GM12878 (cell line): ENCODE measurements at regions of chr20 and their contacts with region 1.

Region 1: GRCh38 chr20:16801919-16802911 is 54.1 kb downstream of the OTOR start:
- DNase-seq: peak; percentile 8
- ATAC-seq: peak; percentile 70
- H3K4me3 ChIP-seq: no peak overlapping the region
- H3K27ac ChIP-seq: no peak overlapping the region
- H3K4me1 ChIP-seq: no peaks in the 10 kb centered on the region
- H3K27me3 ChIP-seq: no peaks in the 10 kb centered on the region; a peak in 1 of 4 replicates
- CTCF ChIP-seq: peak; percentile 80 to 84 (median 80)
- EP300 ChIP-seq: no peak
- POLR2A ChIP-seq: no peak
- RAD21 ChIP-seq: peak; percentile 74

Region 2: DNA sequence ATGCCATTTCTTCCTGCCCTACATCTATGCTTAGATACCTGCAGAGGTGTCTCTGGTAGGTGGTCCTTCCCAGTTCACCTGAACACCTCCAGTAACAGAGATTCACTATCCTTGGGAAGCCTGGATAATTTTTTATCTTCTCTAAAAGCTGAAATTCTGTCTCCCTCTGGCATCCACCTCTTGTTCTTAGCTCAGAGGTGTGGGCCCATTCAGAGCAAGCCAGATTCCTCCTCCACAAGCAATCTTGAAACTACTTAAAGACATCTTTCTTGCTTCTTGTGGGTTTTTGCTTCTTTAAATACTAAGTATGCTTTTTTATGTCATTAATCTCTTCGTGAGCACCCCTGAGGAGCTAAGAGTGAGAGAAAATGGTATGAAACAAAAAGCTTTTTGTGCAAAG is 82.8 kb before region 1 on chr20:
- CTCF ChIA-PET with region 1: no interaction called
- POLR2A ChIA-PET with region 1: no interaction called
- RAD21 ChIA-PET with region 1: no interaction called
- SMC1A ChIA-PET with region 1: no interaction called
- in situ Hi-C with region 1: no loop called
- intact Hi-C with region 1: no loop called
- DNase-seq: no peak
- ATAC-seq: no peak
- H3K4me3 ChIP-seq: no peak overlapping the region
- H3K27ac ChIP-seq: no peak overlapping the region
- H3K4me1 ChIP-seq: no peaks in the 10 kb centered on the region
- H3K27me3 ChIP-seq: peaks cover 0 to 5% of the 10 kb centered on the region in 2 experiments; a peak in 3 of 4 replicates
- CTCF ChIP-seq: no peak
- EP300 ChIP-seq: no peak
- POLR2A ChIP-seq: no peak
- RAD21 ChIP-seq: no peak

Region 3: DNA sequence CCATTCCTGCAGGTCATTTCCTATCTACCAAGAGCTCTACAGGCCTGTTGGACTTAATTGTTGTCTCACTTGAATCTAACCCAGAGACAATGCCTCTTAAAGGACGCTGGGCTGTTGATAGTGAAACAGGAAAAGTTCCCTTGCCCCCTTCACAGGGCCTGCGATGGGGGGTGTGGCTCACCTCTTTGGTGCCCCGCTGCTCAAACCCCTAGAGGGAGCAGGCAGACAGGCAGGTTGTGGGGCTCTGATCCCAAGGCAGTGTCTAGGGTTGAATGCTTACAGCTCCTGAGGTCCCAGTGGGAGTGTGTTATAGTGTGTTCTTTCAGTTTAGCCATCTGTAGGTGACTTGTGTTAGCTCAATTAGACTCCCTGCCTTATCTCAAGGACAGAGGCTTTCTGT is 14.0 kb after region 1 on chr20:
- CTCF ChIA-PET with region 1: interaction called, 72 read pairs
- POLR2A ChIA-PET with region 1: no interaction called
- RAD21 ChIA-PET with region 1: interaction called, 14 read pairs
- SMC1A ChIA-PET with region 1: interaction called, 18 read pairs
- in situ Hi-C with region 1: no loop called
- intact Hi-C with region 1: no loop called
- DNase-seq: no peak
- ATAC-seq: no peak; the same call in 2 of the 3 replicates
- H3K4me3 ChIP-seq: no peak overlapping the region
- H3K27ac ChIP-seq: no peak overlapping the region
- H3K4me1 ChIP-seq: no peaks in the 10 kb centered on the region
- H3K27me3 ChIP-seq: no peaks in the 10 kb centered on the region
- CTCF ChIP-seq: no peak
- EP300 ChIP-seq: no peak
- POLR2A ChIP-seq: no peak
- RAD21 ChIP-seq: no peak

Region 4: GRCh38 chr20:16821211-16822089 is 19.2 kb after region 1 on chr20:
- CTCF ChIA-PET with region 1: interaction called, 72 read pairs
- POLR2A ChIA-PET with region 1: no interaction called
- RAD21 ChIA-PET with region 1: interaction called, 14 read pairs
- SMC1A ChIA-PET with region 1: interaction called, 18 read pairs
- in situ Hi-C with region 1: no loop called
- intact Hi-C with region 1: no loop called
- DNase-seq: no peak
- ATAC-seq: peak; percentile 78
- H3K4me3 ChIP-seq: no peak overlapping the region
- H3K27ac ChIP-seq: no peak overlapping the region
- H3K4me1 ChIP-seq: no peaks in the 10 kb centered on the region
- H3K27me3 ChIP-seq: no peaks in the 10 kb centered on the region
- CTCF ChIP-seq: peak; percentile 74 to 95 (median 90)
- EP300 ChIP-seq: no peak
- POLR2A ChIP-seq: no peak
- RAD21 ChIP-seq: peak; percentile 59

Region 5: DNA sequence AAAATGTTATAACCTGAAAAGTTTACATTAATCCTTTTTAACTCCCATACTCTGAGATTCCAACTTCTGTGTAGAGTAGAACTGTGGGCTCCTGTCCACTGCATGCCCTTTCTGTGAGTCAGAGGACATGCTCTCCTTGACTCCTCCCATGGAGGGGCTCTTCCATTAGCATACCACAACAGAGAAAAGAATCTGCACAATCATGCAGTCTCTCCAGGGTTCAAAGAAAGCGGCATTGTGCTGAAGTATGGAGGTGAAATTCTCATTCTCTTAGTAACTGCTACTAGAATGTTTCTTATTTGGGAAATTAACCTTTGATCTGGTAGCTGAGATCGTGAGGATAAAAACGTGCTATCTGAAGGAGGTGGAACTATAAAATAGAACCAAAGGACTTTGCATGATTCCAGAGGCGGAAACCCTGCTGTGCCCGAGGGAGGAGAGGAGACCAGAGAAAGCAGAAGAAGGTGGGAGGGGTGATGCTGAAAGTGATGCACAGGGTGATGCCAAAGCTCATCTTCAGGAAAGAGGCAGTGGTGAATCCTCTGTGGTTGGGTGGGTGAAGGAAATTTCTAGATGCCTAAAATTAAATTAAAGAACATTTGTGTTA is 222.4 kb after region 1 on chr20:
- CTCF ChIA-PET with region 1: no interaction called
- POLR2A ChIA-PET with region 1: no interaction called
- RAD21 ChIA-PET with region 1: no interaction called
- SMC1A ChIA-PET with region 1: no interaction called
- in situ Hi-C with region 1: no loop called
- intact Hi-C with region 1: no loop called
- DNase-seq: no peak
- ATAC-seq: no peak
- H3K4me3 ChIP-seq: no peak overlapping the region
- H3K27ac ChIP-seq: no peak overlapping the region
- H3K4me1 ChIP-seq: no peaks in the 10 kb centered on the region
- H3K27me3 ChIP-seq: no peaks in the 10 kb centered on the region
- CTCF ChIP-seq: no peak
- EP300 ChIP-seq: no peak
- POLR2A ChIP-seq: no peak
- RAD21 ChIP-seq: no peak

Region 6: GRCh38 chr20:17281478-17281877 is 479.3 kb after region 1 on chr20:
- CTCF ChIA-PET with region 1: interaction called, 7 read pairs
- POLR2A ChIA-PET with region 1: no interaction called
- RAD21 ChIA-PET with region 1: interaction called, 3 read pairs
- SMC1A ChIA-PET with region 1: interaction called, 5 read pairs
- in situ Hi-C with region 1: no loop called
- intact Hi-C with region 1: loop called (anchors 2 kb)
- DNase-seq: no peak
- ATAC-seq: peak; percentile 68
- H3K4me3 ChIP-seq: no peak overlapping the region
- H3K27ac ChIP-seq: no peak overlapping the region
- H3K4me1 ChIP-seq: no peaks in the 10 kb centered on the region
- H3K27me3 ChIP-seq: no peaks in the 10 kb centered on the region
- CTCF ChIP-seq: peak; percentile 44 to 58 (median 52); a peak in 4 of 6 replicates
- EP300 ChIP-seq: no peak
- POLR2A ChIP-seq: no peak
- RAD21 ChIP-seq: peak; percentile 39

Region 7: GRCh38 chr20:17431621-17432364 is 629.6 kb after region 1 on chr20:
- CTCF ChIA-PET with region 1: interaction called, 97 read pairs
- POLR2A ChIA-PET with region 1: no interaction called
- RAD21 ChIA-PET with region 1: interaction called, 18 read pairs
- SMC1A ChIA-PET with region 1: interaction called, 20 read pairs
- in situ Hi-C with region 1: loop called (anchors 5 kb)
- intact Hi-C with region 1: loop called (anchors 1 kb)
- DNase-seq: no peak
- ATAC-seq: peak; percentile 73
- H3K4me3 ChIP-seq: no peak overlapping the region
- H3K27ac ChIP-seq: no peak overlapping the region
- H3K4me1 ChIP-seq: no peaks in the 10 kb centered on the region
- H3K27me3 ChIP-seq: peaks cover 0 to 3% of the 10 kb centered on the region in 2 experiments; a peak in 1 of 4 replicates
- CTCF ChIP-seq: peak; percentile 72 to 88 (median 84)
- EP300 ChIP-seq: no peak
- POLR2A ChIP-seq: no peak
- RAD21 ChIP-seq: peak; percentile 78